Activated naive CD4-positive, alpha-beta T cell treated with anti-CD3 and anti-CD28 coated beads, Interleukin-2, amount 10 ng/mL, durations not matched to agents 7 days and 5 days (primary cell): ENCODE measurements at regions of chr16 and their contacts with region 1.

Region 1: DNA sequence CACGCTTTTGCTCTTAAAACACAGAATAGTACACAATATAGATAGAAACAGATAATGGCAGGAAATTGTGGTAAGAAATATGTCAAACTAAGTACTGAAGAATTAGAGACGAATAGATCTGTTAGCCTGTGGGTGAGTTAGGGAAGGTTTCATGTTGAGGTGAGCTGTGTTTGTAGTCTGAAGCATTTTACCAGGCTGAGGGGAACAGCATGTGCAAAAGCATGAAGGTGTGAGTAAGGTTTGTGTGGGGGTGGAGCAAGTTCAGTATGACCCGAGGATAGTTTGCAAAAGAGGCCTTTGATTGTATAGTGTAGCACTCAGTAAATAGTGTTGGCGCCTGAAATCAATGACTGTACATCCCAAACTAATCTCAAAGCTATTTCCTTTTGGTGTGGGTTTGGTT is 13.8 kb downstream of the IGSF6 start:
- DNase-seq: no peak
- H3K4me3 Mint-ChIP-seq: no peak overlapping the region
- H3K27ac Mint-ChIP-seq: peak overlapping the region; percentile 9
- H3K4me1 Mint-ChIP-seq: peaks cover 20% of the 10 kb centered on the region
- H3K27me3 Mint-ChIP-seq: no peaks in the 10 kb centered on the region

Region 2: GRCh38 chr16:21560462-21560861 is 78.1 kb before region 1 on chr16:
- CTCF ChIA-PET with region 1: no interaction called
- DNase-seq: no peak
- H3K4me3 Mint-ChIP-seq: no peak overlapping the region
- H3K27ac Mint-ChIP-seq: no peak overlapping the region
- H3K4me1 Mint-ChIP-seq: peaks cover 2% of the 10 kb centered on the region
- H3K27me3 Mint-ChIP-seq: peaks cover 18% of the 10 kb centered on the region

Region 3: DNA sequence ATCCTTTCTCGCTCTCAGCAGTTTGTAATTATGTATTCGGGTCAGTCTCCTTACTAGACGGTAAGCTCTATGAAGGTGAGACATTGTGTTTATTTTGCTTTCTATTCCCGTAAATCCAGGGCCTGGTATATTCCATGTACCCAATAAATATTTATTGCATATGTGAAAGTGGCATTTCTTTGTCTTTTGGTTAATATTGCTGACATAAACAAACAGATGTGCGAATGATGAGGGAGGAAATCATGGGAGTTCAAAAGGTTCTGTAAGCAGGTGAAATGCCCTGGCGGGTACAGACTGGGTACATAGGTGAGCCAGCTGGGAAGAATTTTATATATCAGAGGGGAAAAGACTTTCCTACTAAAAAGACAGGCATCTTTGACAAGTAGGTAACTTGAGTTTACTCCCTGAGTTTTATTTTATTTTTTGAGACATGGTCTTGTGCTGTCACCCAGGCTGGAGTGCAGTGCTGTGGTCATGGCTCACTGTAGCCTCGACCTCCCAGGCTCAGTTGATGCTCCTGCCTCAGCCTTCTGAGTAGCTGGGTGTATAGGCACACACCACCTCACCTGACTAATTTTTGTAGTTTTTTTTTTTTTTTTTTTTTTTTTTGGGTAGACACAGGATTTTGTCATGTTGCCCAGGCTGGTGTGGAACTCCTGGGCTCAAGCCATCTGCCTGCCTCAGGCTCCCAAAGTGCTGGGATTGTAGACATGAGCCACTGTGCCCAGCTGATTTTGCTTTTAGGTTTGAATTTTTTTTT is 44.9 kb before region 1 on chr16:
- CTCF ChIA-PET with region 1: interaction called, 107 read pairs
- DNase-seq: no peak
- H3K4me3 Mint-ChIP-seq: no peak overlapping the region
- H3K27ac Mint-ChIP-seq: no peak overlapping the region
- H3K4me1 Mint-ChIP-seq: peaks cover 23% of the 10 kb centered on the region
- H3K27me3 Mint-ChIP-seq: peaks cover 14% of the 10 kb centered on the region